GM12878 (cell line): ENCODE measurements at regions of chr16 and their contacts with region 1.

Region 1: GRCh38 chr16:80631581-80631980 is 90.8 kb downstream of the DYNLRB2 start:
- DNase-seq: no peak
- ATAC-seq: no peak
- H3K4me3 ChIP-seq: no peak overlapping the region
- H3K27ac ChIP-seq: no peak overlapping the region
- H3K4me1 ChIP-seq: peaks cover 11% of the 10 kb centered on the region; the same call in 1 of the 2 replicates
- H3K27me3 ChIP-seq: no peaks in the 10 kb centered on the region
- CTCF ChIP-seq: no peak
- EP300 ChIP-seq: no peak
- POLR2A ChIP-seq: no peak
- RAD21 ChIP-seq: no peak

Region 2: GRCh38 chr16:80691111-80691741 is 59.6 kb after region 1 on chr16:
- CTCF ChIA-PET with region 1: no interaction called
- POLR2A ChIA-PET with region 1: no interaction called
- RAD21 ChIA-PET with region 1: no interaction called
- SMC1A ChIA-PET with region 1: no interaction called
- in situ Hi-C with region 1: loop called (anchors 10 kb)
- intact Hi-C with region 1: no loop called
- DNase-seq: no peak
- ATAC-seq: no peak
- H3K4me3 ChIP-seq: no peak overlapping the region
- H3K27ac ChIP-seq: no peak overlapping the region
- H3K4me1 ChIP-seq: peaks cover 22% of the 10 kb centered on the region
- H3K27me3 ChIP-seq: no peaks in the 10 kb centered on the region
- CTCF ChIP-seq: no peak
- EP300 ChIP-seq: no peak
- POLR2A ChIP-seq: no peak
- RAD21 ChIP-seq: no peak